ENCODE measurements at regions of chr5 and their contacts with region 1.

Region 1: DNA sequence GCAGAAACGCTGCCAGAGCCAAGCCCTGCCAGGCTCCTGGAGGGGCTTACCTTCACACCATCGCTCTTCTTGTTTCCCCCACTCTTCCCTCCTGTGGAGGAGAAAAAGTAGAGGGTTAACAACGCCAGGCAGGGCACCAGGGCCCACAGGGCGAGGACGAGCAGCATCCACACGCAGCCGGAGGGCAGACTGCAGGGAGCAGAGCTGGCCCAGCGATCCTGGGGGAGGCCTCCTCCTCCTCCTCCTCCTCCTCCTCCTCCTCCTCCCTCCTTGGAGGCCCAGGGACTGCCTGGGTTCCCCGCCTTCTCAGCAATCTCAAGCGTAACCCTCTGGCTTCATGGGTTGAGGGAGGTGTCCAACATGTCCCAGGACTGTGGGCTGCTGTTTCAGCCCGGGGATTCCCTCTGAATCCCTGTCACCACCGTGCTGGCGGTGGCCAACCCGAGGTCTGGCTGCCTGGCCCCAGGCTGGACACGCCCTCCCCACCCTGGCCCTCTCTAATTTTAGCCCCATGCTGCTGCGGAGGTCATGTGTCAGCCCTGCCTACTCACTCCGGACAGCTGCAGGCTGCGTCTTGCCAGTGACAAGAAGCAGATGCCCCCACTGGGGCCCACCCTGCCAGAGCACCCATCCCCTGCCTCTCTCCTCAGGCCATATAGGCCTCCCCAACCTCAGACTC is 44.3 kb downstream of the CAMK2A start:
- DNase-seq: no peak
- H3K4me3 ChIP-seq: peak overlapping the region; percentile 27 to 40 (median 33)
- H3K27ac ChIP-seq: peak overlapping the region in 3 of 4 donors; percentile 12 to 64 (median 22)
- H3K4me1 ChIP-seq: peaks cover 13 to 26% (median 21%) of the 10 kb centered on the region in 4 donors
- H3K27me3 ChIP-seq: no peaks in the 10 kb centered on the region
- CTCF ChIP-seq: no peak
- EP300 ChIP-seq: no peak
- POLR2A ChIP-seq: no peak

Region 2: GRCh38 chr5:149551200-149552037 is 693.8 kb before region 1 on chr5 and contains the start of gene CSNK1A1:
- intact Hi-C with region 1: no loop called
- DNase-seq: peak; percentile 99
- H3K4me3 ChIP-seq: peak within 1 kb of the TSS; percentile 84 to 97 (median 95)
- H3K27ac ChIP-seq: peak within 1 kb of the TSS; percentile 99
- H3K4me1 ChIP-seq: peaks cover 27 to 38% (median 32%) of the 10 kb centered on the region in 4 donors
- H3K27me3 ChIP-seq: no peaks in the 10 kb centered on the region
- CTCF ChIP-seq: peak; percentile 89 to 90 (median 89)
- EP300 ChIP-seq: no peak
- POLR2A ChIP-seq: peak; percentile 77
- total RNA-seq, gene CSNK1A1: 283 to 347 (median 336) TPM

Region 3: GRCh38 chr5:150153957-150154617 is 91.2 kb before region 1 on chr5:
- intact Hi-C with region 1: no loop called
- DNase-seq: no peak
- H3K4me3 ChIP-seq: peak overlapping the region; percentile 60 to 67 (median 62)
- H3K27ac ChIP-seq: peak overlapping the region; percentile 85 to 90 (median 88)
- H3K4me1 ChIP-seq: peaks cover 19 to 96% (median 94%) of the 10 kb centered on the region in 4 donors
- H3K27me3 ChIP-seq: no peaks in the 10 kb centered on the region
- CTCF ChIP-seq: peak in 1 of 3 experiments; percentile 13
- EP300 ChIP-seq: no peak
- POLR2A ChIP-seq: no peak

Region 4: DNA sequence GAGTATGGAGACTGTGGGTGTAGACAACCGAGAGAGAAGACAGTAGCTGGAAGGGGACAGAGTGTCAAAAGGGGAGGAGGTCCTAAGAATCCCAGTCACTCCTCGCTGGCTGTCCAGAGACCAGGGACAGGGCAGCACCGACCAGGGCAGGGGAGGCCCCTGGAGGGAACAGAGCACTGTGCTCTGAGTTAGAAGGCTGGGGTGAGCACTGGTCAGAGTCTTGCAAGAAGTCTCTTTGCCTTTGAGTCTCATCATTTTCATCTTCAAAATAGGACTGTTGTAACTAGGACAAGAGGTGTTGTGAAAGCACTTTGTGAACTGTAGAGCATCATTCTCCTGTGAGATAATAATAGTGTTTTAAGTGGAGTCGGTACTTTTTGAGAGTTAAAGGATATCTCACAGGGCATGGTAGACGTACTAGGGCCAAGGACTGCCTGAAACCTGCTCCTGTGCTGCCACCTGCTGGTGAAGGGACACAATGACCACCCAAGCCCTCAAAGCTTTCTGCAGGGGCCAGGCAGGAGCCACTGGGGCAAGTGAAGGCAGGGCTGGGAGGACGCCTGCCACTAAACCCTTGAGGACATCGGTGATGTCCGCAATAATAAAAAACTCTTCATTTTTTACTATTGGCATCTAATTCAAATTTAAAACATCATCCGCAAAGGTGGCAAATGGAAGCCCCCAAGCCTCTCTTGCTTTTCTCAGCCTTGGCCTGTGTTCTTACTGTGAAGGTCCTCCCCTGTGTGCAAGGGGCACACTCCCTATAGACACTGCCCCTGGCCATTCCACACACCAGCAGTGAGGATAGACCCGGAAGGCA is 27.2 kb before region 1 on chr5:
- intact Hi-C with region 1: no loop called
- DNase-seq: no peak
- H3K4me3 ChIP-seq: no peak overlapping the region
- H3K27ac ChIP-seq: no peak overlapping the region
- H3K4me1 ChIP-seq: peaks cover 0 to 17% (median 4%) of the 10 kb centered on the region in 4 donors
- H3K27me3 ChIP-seq: no peaks in the 10 kb centered on the region
- CTCF ChIP-seq: peak; percentile 89 to 97 (median 95)
- EP300 ChIP-seq: no peak
- POLR2A ChIP-seq: no peak

Region 5: GRCh38 chr5:150229571-150229970 is 15.7 kb before region 1 on chr5:
- intact Hi-C with region 1: no loop called
- DNase-seq: no peak
- H3K4me3 ChIP-seq: no peak overlapping the region
- H3K27ac ChIP-seq: no peak overlapping the region
- H3K4me1 ChIP-seq: no peaks in the 10 kb centered on the region
- H3K27me3 ChIP-seq: no peaks in the 10 kb centered on the region
- CTCF ChIP-seq: no peak
- EP300 ChIP-seq: no peak
- POLR2A ChIP-seq: no peak

Region 6: GRCh38 chr5:150357326-150358260 is 112.3 kb after region 1 on chr5 and contains the start of gene TCOF1:
- intact Hi-C with region 1: loop called (anchors 10 kb)
- DNase-seq: peak; percentile 97
- H3K4me3 ChIP-seq: peak within 1 kb of the TSS; percentile 65 to 94 (median 70)
- H3K27ac ChIP-seq: peak within 1 kb of the TSS; percentile 56 to 70 (median 62)
- H3K4me1 ChIP-seq: peaks cover 15 to 26% (median 20%) of the 10 kb centered on the region in 4 donors
- H3K27me3 ChIP-seq: peaks cover 0 to 5% (median 0%) of the 10 kb centered on the region in 4 donors
- CTCF ChIP-seq: peak in 1 of 3 experiments; percentile 17
- EP300 ChIP-seq: no peak
- POLR2A ChIP-seq: no peak
- total RNA-seq, gene TCOF1: 27.4 to 46.0 (median 36.3) TPM